ENCODE measurements at regions of chr7 and their contacts with region 1.

Region 1: DNA sequence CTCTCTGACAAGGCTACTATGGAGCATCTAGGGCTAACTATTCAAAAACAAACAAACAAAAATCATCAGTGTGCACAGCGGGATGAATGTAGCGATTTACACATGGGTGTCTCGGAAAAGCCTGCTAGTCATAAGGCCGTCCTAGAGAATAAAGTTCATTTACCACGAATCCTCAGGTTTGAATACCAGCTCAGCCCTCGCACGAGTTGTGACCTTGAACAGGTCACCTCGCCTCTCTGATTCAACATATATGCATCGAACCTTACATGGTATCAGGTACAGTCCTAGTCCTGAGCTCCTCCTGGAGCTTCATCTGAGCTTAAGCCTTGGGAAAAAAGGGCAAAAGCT is 572 bp downstream of the ATP5MF start:
- DNase-seq: peak; percentile 16
- H3K4me3 Mint-ChIP-seq: peak overlapping the region; percentile 90
- H3K27ac Mint-ChIP-seq: peak overlapping the region; percentile 92
- H3K4me1 Mint-ChIP-seq: peaks cover 32% of the 10 kb centered on the region
- H3K27me3 Mint-ChIP-seq: no peaks in the 10 kb centered on the region

Region 2: DNA sequence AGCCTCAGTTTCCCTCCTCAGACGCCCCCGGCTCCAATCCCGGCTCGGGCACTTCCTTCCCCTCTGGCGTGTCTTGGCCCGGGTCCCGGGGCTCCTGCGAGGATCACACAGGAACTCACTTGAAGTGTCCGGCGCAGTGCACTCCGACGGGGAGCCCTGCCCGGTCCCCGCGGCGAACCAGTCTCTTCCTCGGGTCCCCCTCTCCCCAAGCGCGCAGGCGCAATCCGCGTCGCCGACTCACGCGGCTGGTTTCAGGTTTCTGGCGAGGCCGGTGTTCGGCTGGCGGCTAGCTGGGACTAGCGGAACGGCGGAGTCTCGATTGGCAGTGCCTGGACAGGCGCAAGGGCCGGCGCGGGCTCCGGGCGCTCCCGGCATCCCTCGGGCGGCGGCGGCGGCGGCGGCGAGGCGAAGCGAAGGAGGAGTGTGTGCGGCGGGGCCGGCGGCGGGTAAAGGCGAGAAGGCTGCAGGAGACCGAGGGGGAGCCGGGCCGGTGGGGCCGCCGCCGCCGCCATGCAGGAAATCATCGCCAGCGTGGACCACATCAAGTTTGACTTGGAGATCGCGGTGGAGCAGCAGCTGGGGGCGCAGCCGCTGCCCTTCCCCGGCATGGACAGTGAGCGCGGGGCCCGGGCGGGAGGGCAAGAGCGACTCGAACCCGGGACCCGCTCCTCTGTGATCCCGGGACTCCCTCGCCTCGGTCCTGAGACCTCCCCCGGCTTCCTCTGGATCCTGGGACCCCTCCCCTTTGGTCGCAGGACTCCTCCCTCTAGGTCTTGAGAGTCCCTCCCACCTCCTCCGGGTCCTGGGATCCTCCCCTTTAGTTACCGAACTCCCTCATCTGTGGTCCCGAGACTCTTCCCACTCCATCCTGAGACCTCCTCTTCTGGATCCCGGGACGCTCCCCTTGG is 26.6 kb before region 1 on chr7 and contains the starts of genes CPSF4 and PTCD1:
- CTCF ChIA-PET with region 1: no interaction called
- intact Hi-C with region 1: loop called (anchors 1 kb)
- DNase-seq: peak; percentile 95
- H3K4me3 Mint-ChIP-seq: peak within 1 kb of the TSS; percentile 98
- H3K27ac Mint-ChIP-seq: peak within 1 kb of the TSS; percentile 94
- H3K4me1 Mint-ChIP-seq: peaks cover 43% of the 10 kb centered on the region
- H3K27me3 Mint-ChIP-seq: no peaks in the 10 kb centered on the region
- total RNA-seq, gene CPSF4: 70.6 to 73.5 TPM
- total RNA-seq, gene PTCD1: 3.5 to 5.1 TPM

Region 3: GRCh38 chr7:100271716-100272537 is 806.5 kb after region 1 on chr7:
- CTCF ChIA-PET with region 1: no interaction called
- intact Hi-C with region 1: no loop called
- DNase-seq: peak; percentile 98
- H3K4me3 Mint-ChIP-seq: peak overlapping the region; percentile 70
- H3K27ac Mint-ChIP-seq: no peak overlapping the region
- H3K4me1 Mint-ChIP-seq: peaks cover 11% of the 10 kb centered on the region
- H3K27me3 Mint-ChIP-seq: no peaks in the 10 kb centered on the region

Measured in activated naive CD4-positive, alpha-beta T cell treated with anti-CD3 and anti-CD28 coated beads for 36 hours (primary cell).